Gastrocnemius medialis (tissue), 4 donors: ENCODE measurements at regions of chr4 and their contacts with region 1.

Region 1: DNA sequence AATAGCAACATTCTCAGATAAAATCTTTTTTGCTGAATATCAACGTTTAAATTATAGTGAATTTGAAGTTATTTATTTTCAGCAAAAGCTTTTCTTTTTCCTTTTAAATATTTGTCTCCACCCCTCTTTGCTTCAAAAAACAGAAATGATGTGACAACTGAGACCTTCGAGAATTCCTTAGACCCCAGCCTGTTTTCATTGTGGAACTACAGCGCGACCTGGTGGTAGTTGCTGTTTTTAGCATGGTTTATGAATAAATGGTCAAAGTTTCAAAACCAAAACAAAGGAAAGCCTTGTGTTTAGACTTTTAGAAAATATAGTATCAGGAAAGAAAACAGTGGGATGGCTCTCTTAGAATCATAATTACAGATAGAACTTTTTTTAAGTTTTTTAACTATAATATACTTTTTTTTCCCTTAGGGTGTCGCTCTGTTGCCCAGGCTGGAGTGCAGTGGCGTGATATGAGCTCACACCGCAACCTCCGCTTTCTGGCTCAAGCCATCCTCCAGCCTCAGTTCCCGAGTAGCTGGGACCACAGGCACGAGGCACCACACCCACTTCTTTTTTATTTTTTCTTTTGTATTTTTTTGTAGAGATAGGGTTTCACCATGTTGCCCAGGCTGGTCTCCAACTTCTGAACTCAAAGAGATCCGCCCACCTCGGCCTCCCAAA is 26.8 kb upstream of the TMEM184C start:
- DNase-seq: no peak
- ATAC-seq: no peak
- H3K4me3 ChIP-seq: no peak overlapping the region
- H3K27ac ChIP-seq: peak overlapping the region in 1 of 4 donors; percentile 22
- H3K4me1 ChIP-seq: no peaks in the 10 kb centered on the region
- H3K27me3 ChIP-seq: no peaks in the 10 kb centered on the region
- CTCF ChIP-seq: peak; percentile 29 to 55 (median 48)
- POLR2A ChIP-seq: no peak

Region 2: GRCh38 chr4:147019061-147019460 is 571.3 kb before region 1 on chr4:
- in situ Hi-C with region 1: loop called in 1 of 4 experiments (anchors 25 kb)
- intact Hi-C with region 1: no loop called
- DNase-seq: peak; percentile 13 to 23
- ATAC-seq: peak in 1 of 2 donors; percentile 58
- H3K4me3 ChIP-seq: no peak overlapping the region
- H3K27ac ChIP-seq: no peak overlapping the region
- H3K4me1 ChIP-seq: no peaks in the 10 kb centered on the region
- H3K27me3 ChIP-seq: no peaks in the 10 kb centered on the region
- CTCF ChIP-seq: peak; percentile 20 to 58 (median 54)
- POLR2A ChIP-seq: no peak

Region 3: GRCh38 chr4:147103403-147103946 is 486.9 kb before region 1 on chr4:
- in situ Hi-C with region 1: loop called in 1 of 4 experiments (anchors 25 kb)
- intact Hi-C with region 1: no loop called
- DNase-seq: peak; percentile 61 to 73
- ATAC-seq: peak; percentile 96 to 98
- H3K4me3 ChIP-seq: no peak overlapping the region
- H3K27ac ChIP-seq: peak overlapping the region; percentile 53 to 74 (median 72)
- H3K4me1 ChIP-seq: peaks cover 16 to 17% of the 10 kb centered on the region in 2 donors
- H3K27me3 ChIP-seq: no peaks in the 10 kb centered on the region
- CTCF ChIP-seq: no peak
- POLR2A ChIP-seq: no peak

Region 4: DNA sequence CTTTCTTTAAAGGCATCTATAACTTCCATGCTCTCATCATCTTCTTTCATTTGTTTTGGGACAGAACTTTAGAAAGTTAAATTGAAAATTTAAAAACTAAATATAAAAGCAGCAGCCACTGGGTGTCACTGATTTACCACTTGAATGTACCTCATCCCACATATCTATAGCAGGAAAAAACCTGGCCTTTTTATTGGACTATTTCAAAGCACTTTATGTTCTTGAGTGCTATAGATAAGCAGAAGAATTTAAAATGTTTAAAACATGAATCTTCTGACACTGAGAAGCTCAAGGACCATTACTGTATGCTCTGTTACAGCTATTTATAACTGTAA is 479.4 kb before region 1 on chr4:
- in situ Hi-C with region 1: loop called in 1 of 4 experiments (anchors 25 kb)
- intact Hi-C with region 1: loop called (anchors 10 kb)
- DNase-seq: no peak
- ATAC-seq: no peak
- H3K4me3 ChIP-seq: no peak overlapping the region
- H3K27ac ChIP-seq: no peak overlapping the region
- H3K4me1 ChIP-seq: no peaks in the 10 kb centered on the region
- H3K27me3 ChIP-seq: no peaks in the 10 kb centered on the region
- CTCF ChIP-seq: no peak
- POLR2A ChIP-seq: no peak

Region 5: DNA sequence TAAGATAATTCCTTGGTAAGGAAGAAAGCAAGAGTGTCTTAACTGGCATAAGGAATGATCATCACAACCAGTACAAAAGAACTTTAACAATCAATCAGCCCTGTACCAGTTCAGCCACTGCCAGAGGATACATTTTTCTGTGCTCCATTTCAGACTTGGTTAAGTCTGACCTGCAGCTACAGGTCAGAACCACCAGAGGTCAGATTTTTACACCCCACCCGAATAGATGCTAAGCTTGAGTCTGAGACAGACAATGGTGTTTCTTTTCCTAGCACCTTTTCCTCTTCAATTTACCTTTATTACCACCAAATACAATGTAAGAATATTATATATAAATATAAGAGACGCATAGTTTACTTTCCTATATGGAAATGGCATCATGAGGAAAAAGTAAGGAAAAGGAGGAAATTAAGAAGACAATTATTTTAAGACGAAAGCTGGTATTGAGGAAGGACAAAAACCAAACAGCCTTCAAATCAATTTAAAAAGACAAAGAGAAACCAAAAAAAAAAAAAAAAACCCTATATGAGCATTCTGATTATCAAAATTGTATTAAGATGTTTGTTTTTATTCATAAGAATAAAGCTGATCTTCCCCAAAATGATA is 429.4 kb before region 1 on chr4:
- in situ Hi-C with region 1: loop called in 2 of 4 experiments (anchors 25 kb)
- intact Hi-C with region 1: loop called (anchors 10 kb)
- DNase-seq: no peak
- ATAC-seq: peak in 1 of 2 donors; percentile 54
- H3K4me3 ChIP-seq: no peak overlapping the region
- H3K27ac ChIP-seq: no peak overlapping the region
- H3K4me1 ChIP-seq: peaks cover 0 to 10% of the 10 kb centered on the region in 2 donors
- H3K27me3 ChIP-seq: no peaks in the 10 kb centered on the region
- CTCF ChIP-seq: peak in 3 of 5 experiments; percentile 33 to 61 (median 54)
- POLR2A ChIP-seq: no peak

Region 6: DNA sequence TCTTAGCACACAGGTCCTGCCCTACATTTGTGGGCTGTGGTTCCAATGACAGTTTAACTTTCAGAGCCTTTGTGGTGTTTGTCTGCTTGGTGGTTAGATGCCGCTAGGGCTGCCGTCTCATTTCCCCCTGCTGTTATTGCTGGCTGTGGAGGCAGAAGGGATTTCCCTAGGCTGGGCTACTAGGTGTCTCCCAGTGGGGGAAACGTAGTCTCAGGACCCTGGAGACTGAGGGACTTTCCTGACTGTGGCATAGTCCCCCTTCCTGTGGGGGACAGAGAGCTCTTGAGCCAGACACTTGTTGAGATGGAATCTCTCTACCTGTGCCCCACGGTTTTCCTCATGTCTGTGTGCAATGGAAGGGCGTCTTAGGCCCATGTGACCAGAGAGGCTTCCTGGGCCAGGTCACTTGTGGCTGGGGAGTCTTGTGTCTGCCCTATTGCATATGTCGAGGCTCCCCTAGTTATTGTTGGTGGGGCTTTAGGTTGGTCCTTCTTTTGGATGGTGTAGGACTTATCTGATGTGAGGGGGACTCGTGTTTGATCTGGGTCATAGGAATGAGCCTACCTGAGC is 209.7 kb after region 1 on chr4:
- in situ Hi-C with region 1: no loop called
- intact Hi-C with region 1: no loop called
- DNase-seq: no peak
- ATAC-seq: peak in 1 of 2 donors; percentile 63
- H3K4me3 ChIP-seq: no peak overlapping the region
- H3K27ac ChIP-seq: peak overlapping the region; percentile 51 to 69 (median 66)
- H3K4me1 ChIP-seq: peaks cover 53% of the 10 kb centered on the region in 2 donors
- H3K27me3 ChIP-seq: no peaks in the 10 kb centered on the region
- CTCF ChIP-seq: no peak
- POLR2A ChIP-seq: no peak